HCT116 (cell line): ENCODE measurements at regions of chr19 and their contacts with region 1.

Region 1: GRCh38 chr19:57632987-57633831 is at the start of gene ZNF211:
- DNase-seq: peak; percentile 88
- ATAC-seq: peak; percentile 99
- H3K4me3 ChIP-seq: peak within 1 kb of the TSS; percentile 76 to 79
- H3K27ac ChIP-seq: peak within 1 kb of the TSS; percentile 43; the same call in 1 of the 2 replicates
- H3K4me1 ChIP-seq: peaks cover 3 to 7% of the 10 kb centered on the region in 2 experiments; a peak in 2 of 4 replicates
- H3K27me3 ChIP-seq: no peaks in the 10 kb centered on the region
- CTCF ChIP-seq: no peak
- POLR2A ChIP-seq: no peak
- RAD21 ChIP-seq: no peak
- total RNA-seq, gene ZNF211: 6.7 TPM

Region 2: GRCh38 chr19:57708641-57709361 is 75.6 kb after region 1 on chr19 and contains the start of gene ZNF154:
- CTCF ChIA-PET with region 1: no interaction called
- POLR2A ChIA-PET with region 1: no interaction called
- RAD21 ChIA-PET with region 1: no interaction called
- intact Hi-C with region 1: no loop called
- DNase-seq: no peak
- ATAC-seq: no peak
- H3K4me3 ChIP-seq: no peak within 1 kb of the TSS
- H3K27ac ChIP-seq: no peak within 1 kb of the TSS
- H3K4me1 ChIP-seq: no peaks in the 10 kb centered on the region
- H3K27me3 ChIP-seq: no peaks in the 10 kb centered on the region
- CTCF ChIP-seq: no peak
- POLR2A ChIP-seq: no peak
- RAD21 ChIP-seq: no peak
- total RNA-seq, gene ZNF154: 0.10 TPM

Region 3: DNA sequence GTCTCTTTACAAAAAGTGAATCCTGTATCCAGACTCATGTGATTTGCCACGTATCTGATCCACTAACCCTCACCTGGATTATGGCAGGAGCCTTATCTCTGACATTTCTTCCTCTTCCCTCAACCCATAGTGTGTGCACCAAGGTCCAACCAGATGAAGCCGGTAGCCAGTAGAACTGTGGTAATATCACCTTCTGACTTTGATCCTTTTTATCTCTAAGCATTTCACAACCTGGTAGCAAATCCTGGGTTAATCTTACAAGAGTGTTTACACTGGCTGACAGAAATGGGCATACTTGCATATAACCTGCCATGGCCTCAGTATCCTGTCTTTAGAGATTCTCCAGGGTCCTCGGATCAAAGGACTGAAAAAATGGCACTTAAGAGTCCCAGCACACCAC is 281.3 kb after region 1 on chr19:
- CTCF ChIA-PET with region 1: no interaction called
- POLR2A ChIA-PET with region 1: no interaction called
- RAD21 ChIA-PET with region 1: no interaction called
- intact Hi-C with region 1: loop called (anchors 10 kb)
- DNase-seq: no peak
- ATAC-seq: no peak
- H3K4me3 ChIP-seq: no peak overlapping the region
- H3K27ac ChIP-seq: no peak overlapping the region
- H3K4me1 ChIP-seq: peaks cover 0 to 6% of the 10 kb centered on the region in 2 experiments; a peak in 1 of 4 replicates
- H3K27me3 ChIP-seq: no peaks in the 10 kb centered on the region
- CTCF ChIP-seq: no peak
- POLR2A ChIP-seq: no peak
- RAD21 ChIP-seq: no peak